ENCODE measurements at regions of chr18 and their contacts with region 1.

Region 1: DNA sequence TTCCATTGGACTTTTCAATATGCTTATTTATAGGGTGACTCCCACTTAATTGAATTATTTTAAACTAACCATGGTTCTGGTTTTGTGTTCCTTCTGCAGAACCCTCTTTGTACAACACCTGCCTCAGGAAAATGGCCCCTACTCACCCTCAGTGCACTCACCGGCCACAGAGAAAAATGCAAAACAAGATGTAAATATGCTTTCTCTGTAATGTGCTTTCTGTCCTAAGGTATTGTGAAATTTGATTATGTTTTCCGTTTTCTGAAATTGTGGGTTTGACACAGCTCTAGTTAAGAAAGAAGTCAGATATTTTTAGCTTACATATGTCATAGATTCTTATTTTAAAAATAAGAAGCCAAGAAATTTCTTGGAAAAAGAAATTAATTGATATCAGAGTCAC is 357.7 kb upstream of the SMIM21 start:
- DNase-seq: no peak
- H3K4me3 ChIP-seq: no peak overlapping the region
- H3K27ac ChIP-seq: no peak overlapping the region
- H3K4me1 ChIP-seq: no peaks in the 10 kb centered on the region
- H3K27me3 ChIP-seq: no peaks in the 10 kb centered on the region
- CTCF ChIP-seq: no peak

Region 2: DNA sequence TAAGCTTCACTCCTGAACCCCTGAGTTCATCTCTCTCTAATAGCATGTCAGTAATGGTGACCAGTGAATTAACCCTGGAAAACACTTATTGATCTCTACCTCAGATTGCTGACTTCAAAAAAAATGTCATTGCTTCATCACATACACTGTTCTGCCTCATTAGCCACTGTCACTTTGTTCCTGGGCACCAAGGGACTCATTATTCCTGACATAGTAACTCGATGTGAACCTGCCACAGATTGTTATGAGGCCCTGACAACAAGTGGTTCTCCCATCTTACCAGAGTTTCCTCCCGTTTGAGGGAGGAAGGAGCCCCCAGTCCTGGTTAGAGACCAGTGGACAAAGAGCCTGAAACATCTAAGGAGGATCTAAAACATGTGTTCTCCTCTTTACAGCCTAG is 45.6 kb after region 1 on chr18:
- CTCF ChIA-PET with region 1: no interaction called
- dilution Hi-C with region 1: loop called (anchors 5 kb)
- in situ Hi-C with region 1: no loop called
- intact Hi-C with region 1: no loop called
- DNase-seq: no peak
- H3K4me3 ChIP-seq: no peak overlapping the region
- H3K27ac ChIP-seq: no peak overlapping the region
- H3K4me1 ChIP-seq: no peaks in the 10 kb centered on the region
- H3K27me3 ChIP-seq: no peaks in the 10 kb centered on the region
- CTCF ChIP-seq: no peak

Region 3: DNA sequence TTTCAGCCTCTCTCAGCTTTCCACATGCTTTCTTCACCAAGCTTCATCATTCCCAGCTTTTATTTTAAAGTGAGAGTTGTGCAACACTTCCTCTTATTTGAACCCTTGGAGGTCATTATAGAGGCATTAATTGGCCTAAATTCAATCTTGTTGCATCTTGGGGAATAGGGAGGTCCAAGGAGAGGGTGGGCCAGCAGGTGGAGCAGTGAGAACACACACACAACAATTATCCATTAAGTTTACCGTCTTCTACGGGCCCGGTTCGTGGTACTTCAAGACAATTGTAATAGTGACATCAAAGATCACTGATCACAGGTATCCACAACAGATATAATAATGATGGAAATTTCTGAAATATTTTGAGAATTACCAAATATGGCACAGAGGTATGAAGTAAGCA is 99.5 kb after region 1 on chr18:
- CTCF ChIA-PET with region 1: no interaction called
- dilution Hi-C with region 1: loop called (anchors 5 kb)
- in situ Hi-C with region 1: no loop called
- intact Hi-C with region 1: no loop called
- DNase-seq: no peak
- H3K4me3 ChIP-seq: no peak overlapping the region
- H3K27ac ChIP-seq: no peak overlapping the region
- H3K4me1 ChIP-seq: no peaks in the 10 kb centered on the region
- H3K27me3 ChIP-seq: no peaks in the 10 kb centered on the region
- CTCF ChIP-seq: no peak

Region 4: GRCh38 chr18:76426737-76427305 is 641.6 kb after region 1 on chr18:
- CTCF ChIA-PET with region 1: no interaction called
- dilution Hi-C with region 1: no loop called
- in situ Hi-C with region 1: no loop called
- intact Hi-C with region 1: no loop called
- DNase-seq: no peak
- H3K4me3 ChIP-seq: no peak overlapping the region
- H3K27ac ChIP-seq: no peak overlapping the region
- H3K4me1 ChIP-seq: no peaks in the 10 kb centered on the region
- H3K27me3 ChIP-seq: no peaks in the 10 kb centered on the region
- CTCF ChIP-seq: peak; percentile 77 to 85